Mammary epithelial cell (primary cell): ENCODE measurements at regions of chr16 and their contacts with region 1.

Region 1: GRCh38 chr16:76837872-76838271 is 353.1 kb upstream of the MON1B start:
- DNase-seq: peak; percentile 33
- H3K4me3 ChIP-seq: no peak overlapping the region
- H3K27ac ChIP-seq: no peak overlapping the region
- H3K4me1 ChIP-seq: no peaks in the 10 kb centered on the region
- H3K27me3 ChIP-seq: no peaks in the 10 kb centered on the region
- CTCF ChIP-seq: no peak

Region 2: GRCh38 chr16:74862741-74863244 is 1975.1 kb before region 1 on chr16:
- CTCF ChIA-PET with region 1: interaction called, 14 read pairs
- dilution Hi-C with region 1: no loop called
- in situ Hi-C with region 1: no loop called
- intact Hi-C with region 1: no loop called
- DNase-seq: peak; percentile 49
- H3K4me3 ChIP-seq: no peak overlapping the region
- H3K27ac ChIP-seq: no peak overlapping the region
- H3K4me1 ChIP-seq: peaks cover 6% of the 10 kb centered on the region
- H3K27me3 ChIP-seq: no peaks in the 10 kb centered on the region
- CTCF ChIP-seq: peak; percentile 78 to 88

Region 3: DNA sequence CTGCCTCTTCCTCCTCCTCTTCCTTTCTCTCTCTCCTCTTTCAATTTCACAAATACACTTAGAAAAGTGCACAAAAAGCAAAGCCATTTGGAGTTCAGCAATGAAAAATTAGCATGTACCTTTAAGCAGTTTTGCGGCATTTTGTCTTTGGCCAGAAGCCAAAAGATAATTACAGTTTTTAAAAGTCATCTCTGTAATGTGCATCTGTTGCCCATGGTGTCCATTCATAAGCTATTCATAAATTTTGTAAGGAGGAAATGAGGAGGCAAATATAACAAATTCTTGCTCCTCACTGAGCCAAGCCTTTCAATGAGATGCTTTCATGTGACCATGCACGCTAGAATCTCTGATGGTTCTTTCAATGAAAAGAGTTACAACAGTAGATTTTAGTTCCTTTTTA is 106.0 kb after region 1 on chr16:
- CTCF ChIA-PET with region 1: no interaction called
- dilution Hi-C with region 1: no loop called
- in situ Hi-C with region 1: no loop called
- intact Hi-C with region 1: no loop called
- DNase-seq: no peak
- H3K4me3 ChIP-seq: no peak overlapping the region
- H3K27ac ChIP-seq: no peak overlapping the region
- H3K4me1 ChIP-seq: peaks cover 3% of the 10 kb centered on the region
- H3K27me3 ChIP-seq: no peaks in the 10 kb centered on the region
- CTCF ChIP-seq: no peak